ENCODE measurements at regions of chr10 and their contacts with region 1.

Region 1: DNA sequence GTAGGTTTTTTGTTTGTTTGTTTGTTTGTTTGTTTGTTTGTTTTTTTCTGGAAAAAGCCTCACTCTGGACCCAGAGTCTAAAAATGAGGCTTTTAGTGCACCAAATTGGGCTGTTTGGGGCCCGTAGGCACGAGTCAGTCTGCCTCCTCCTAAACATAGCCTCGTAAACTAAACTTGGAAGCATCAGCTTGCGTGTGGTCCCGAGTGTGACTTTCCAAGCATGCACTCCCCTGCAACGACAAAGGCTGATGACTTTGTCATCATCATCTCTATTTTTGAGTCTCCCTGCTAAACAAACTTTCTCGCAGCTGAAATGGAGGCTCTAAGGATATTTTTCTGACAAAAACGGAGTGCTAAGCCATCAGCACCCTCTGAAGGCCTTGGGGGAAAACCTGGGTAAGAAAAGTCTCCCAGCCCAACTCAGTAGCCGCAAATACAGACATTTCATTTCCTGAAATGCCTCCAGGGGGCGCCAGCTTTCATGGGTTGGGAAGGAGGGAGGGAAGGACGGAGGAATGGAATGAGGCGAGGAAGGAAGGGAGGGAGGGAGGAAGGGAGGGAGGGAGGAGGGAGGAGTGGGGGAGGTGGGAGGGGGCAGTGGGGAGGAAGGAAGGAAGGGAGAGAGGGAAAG is 245.9 kb downstream of the KCNMA1 start:
- DNase-seq: peak; percentile 75
- ATAC-seq: peak; percentile 67 to 71

Region 2: GRCh38 chr10:77165445-77166208 is 226.1 kb before region 1 on chr10:
- intact Hi-C with region 1: loop called (anchors 5 to 10 kb)
- DNase-seq: no peak
- ATAC-seq: peak; percentile 47 to 55

Region 3: GRCh38 chr10:77173615-77174461 is 217.9 kb before region 1 on chr10:
- intact Hi-C with region 1: loop called in 1 of 2 experiments (anchors 10 kb)
- DNase-seq: peak; percentile 68
- ATAC-seq: peak; percentile 75 to 77